Activated T-helper 1 cell treated with anti-CD3 and anti-CD28 coated beads, Interleukin-12 subunit alpha, Interleukin-12 subunit beta, Interleukin-2, Interleukin-4 antibody, amounts not matched to agents 30 ng/mL and 10 ng/mL and 1 ng/mL, durations not matched to agents 14 hours and 24 hours and 36 hours (primary cell): ENCODE measurements at regions of chr2 and their contacts with region 1.

Region 1: GRCh38 chr2:88691339-88692183 is at the start of gene RPIA:
- DNase-seq: peak; percentile 98
- H3K4me3 Mint-ChIP-seq: peak within 1 kb of the TSS; percentile 96
- H3K27ac Mint-ChIP-seq: peak within 1 kb of the TSS; percentile 91
- H3K4me1 Mint-ChIP-seq: peaks cover 41% of the 10 kb centered on the region
- H3K27me3 Mint-ChIP-seq: no peaks in the 10 kb centered on the region
- total RNA-seq, gene RPIA: 79.1 and 83.1 TPM in 2 replicates

Region 2: DNA sequence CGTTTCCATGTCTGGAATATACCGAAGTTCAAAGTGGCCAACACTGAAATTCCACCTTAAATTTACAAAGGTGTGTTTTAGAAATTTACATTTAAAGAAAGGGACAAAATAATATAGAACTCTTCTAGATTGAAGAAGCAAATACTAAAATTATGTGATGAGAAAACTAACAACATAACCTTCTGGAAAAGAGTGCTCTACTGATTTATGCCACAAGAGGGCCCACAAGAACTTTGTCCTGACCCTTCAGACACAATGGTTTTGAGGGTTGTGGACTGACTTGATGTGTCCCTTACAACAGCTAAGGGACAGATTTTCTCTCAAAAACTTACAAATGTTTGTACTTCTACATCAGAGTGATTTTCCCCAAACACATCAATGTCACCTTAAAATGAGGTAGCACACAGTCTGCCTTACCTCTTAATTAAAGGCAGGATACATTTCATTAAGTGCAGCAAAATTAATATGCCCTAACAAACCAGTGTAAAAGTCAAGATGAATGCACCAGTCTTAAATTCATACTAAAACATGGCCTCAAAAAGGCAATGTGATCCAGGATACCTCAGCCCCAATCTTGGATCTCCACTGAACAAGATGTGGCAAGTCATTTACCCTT is 100.5 kb before region 1 on chr2:
- intact Hi-C with region 1: loop called (anchors 1 kb)
- DNase-seq: peak; percentile 19
- H3K4me3 Mint-ChIP-seq: no peak overlapping the region
- H3K27ac Mint-ChIP-seq: no peak overlapping the region
- H3K4me1 Mint-ChIP-seq: no peaks in the 10 kb centered on the region
- H3K27me3 Mint-ChIP-seq: no peaks in the 10 kb centered on the region

Region 3: DNA sequence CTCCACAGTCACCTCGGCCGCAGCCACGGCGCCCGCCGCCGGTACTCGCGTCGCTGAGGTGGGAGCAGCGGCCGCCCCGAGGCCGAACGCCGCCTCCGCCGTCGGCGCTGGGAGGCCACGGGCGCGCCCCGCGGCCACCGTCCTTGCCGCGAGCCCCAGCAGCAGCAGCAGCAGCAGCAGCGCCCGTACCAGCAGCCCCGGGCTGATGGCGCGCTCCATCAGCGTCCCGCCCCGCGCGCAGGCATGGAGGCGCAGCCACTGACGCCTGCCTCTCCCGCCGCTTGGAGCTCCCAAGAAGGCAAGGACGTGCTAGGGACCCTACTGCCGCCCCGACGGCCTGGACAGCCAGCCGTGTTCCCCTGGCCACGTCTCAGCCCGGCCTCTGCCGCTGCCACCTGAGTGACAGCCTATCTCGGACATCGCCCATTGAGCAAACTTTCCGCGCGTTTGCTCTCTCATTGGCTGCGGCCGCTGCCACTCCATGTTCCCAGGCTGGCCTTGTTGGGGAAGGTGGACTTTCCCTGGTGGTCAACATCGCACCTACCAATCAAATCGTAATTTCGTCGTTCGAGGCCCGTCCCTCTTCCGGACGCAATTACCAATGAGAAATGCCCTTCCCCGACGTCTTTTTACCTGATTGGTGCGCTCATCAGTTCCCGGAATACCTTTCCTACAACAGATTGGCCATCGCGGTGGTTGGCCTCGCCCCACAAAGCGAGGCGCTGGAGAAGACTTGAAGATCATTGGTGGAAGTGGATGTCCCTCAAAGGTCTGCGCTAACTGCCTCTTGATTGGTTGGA is 64.3 kb before region 1 on chr2 and contains the start of gene EIF2AK3:
- intact Hi-C with region 1: loop called (anchors 1 kb)
- DNase-seq: peak; percentile 96
- H3K4me3 Mint-ChIP-seq: peak within 1 kb of the TSS; percentile 94
- H3K27ac Mint-ChIP-seq: peak within 1 kb of the TSS; percentile 88
- H3K4me1 Mint-ChIP-seq: peaks cover 5% of the 10 kb centered on the region
- H3K27me3 Mint-ChIP-seq: no peaks in the 10 kb centered on the region
- total RNA-seq, gene EIF2AK3: 28.7 and 29.6 TPM in 2 replicates

Region 4: DNA sequence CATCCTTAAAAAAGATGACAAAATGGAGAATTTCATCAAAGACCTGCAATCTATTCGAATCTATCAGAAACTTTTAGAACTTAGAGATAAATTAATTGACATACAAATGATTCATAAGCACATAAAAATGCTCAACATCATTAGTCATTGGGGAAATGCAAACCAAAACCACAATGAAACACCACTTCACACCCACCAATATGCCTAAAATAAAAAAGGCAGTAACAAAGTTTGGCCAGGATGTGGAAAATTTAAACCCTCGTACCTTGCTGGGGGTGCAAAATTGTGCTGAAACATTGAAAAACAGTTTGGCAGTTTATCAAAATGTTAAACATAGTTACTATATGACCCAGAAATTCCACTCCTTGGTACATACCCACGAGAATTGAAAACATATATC is 52.8 kb before region 1 on chr2:
- intact Hi-C with region 1: loop called (anchors 1 kb)
- DNase-seq: peak; percentile 19
- H3K4me3 Mint-ChIP-seq: no peak overlapping the region
- H3K27ac Mint-ChIP-seq: peak overlapping the region; percentile 82
- H3K4me1 Mint-ChIP-seq: peaks cover 65% of the 10 kb centered on the region
- H3K27me3 Mint-ChIP-seq: no peaks in the 10 kb centered on the region